Esophagus muscularis mucosa (tissue), 4 donors: ENCODE measurements at regions of chr9 and their contacts with region 1.

Region 1: GRCh38 chr9:129610473-129611301 is 10.2 kb downstream of the C9orf50 start:
- DNase-seq: no peak
- H3K4me3 ChIP-seq: peak overlapping the region; percentile 66 to 84 (median 76)
- H3K27ac ChIP-seq: peak overlapping the region; percentile 89 to 95 (median 90)
- H3K4me1 ChIP-seq: peaks cover 43 to 66% (median 54%) of the 10 kb centered on the region in 4 donors
- H3K27me3 ChIP-seq: no peaks in the 10 kb centered on the region
- CTCF ChIP-seq: peak; percentile 76 to 99 (median 98)
- EP300 ChIP-seq: no peak
- POLR2A ChIP-seq: no peak

Region 2: DNA sequence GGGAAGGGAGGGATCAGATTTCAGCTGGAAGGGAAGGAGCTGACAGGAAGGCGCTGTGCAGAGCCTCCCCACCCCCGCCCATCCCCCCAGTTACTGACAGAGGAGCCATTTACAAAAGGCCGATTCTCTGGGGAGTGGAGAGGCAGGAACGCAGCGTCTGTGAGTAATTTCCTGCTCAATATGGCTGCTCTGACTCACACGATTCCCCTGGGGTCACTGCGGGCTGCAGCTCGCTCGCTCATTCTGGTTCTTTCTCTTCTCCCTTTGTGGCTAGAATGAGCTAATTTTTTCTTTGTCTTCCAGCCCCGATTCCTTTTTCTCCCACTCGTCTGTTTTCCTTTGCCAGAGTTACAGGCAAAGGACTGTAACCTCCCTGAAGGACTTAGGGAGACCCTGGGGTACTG is 470.7 kb before region 1 on chr9:
- intact Hi-C with region 1: loop called (anchors 1 kb)
- DNase-seq: peak; percentile 99
- H3K4me3 ChIP-seq: peak overlapping the region; percentile 47 to 60 (median 58)
- H3K27ac ChIP-seq: peak overlapping the region; percentile 93 to 99 (median 98)
- H3K4me1 ChIP-seq: peaks cover 68 to 80% (median 78%) of the 10 kb centered on the region in 4 donors
- H3K27me3 ChIP-seq: no peaks in the 10 kb centered on the region
- CTCF ChIP-seq: no peak
- EP300 ChIP-seq: peak; percentile 78
- POLR2A ChIP-seq: no peak

Region 3: GRCh38 chr9:129174085-129174723 is 436.5 kb before region 1 on chr9:
- intact Hi-C with region 1: loop called (anchors 2 kb)
- DNase-seq: peak; percentile 98
- H3K4me3 ChIP-seq: peak overlapping the region; percentile 69 to 94 (median 88)
- H3K27ac ChIP-seq: peak overlapping the region; percentile 91 to 99 (median 94)
- H3K4me1 ChIP-seq: peaks cover 24 to 43% (median 38%) of the 10 kb centered on the region in 4 donors
- H3K27me3 ChIP-seq: no peaks in the 10 kb centered on the region
- CTCF ChIP-seq: peak; percentile 97 to 98 (median 98)
- EP300 ChIP-seq: no peak
- POLR2A ChIP-seq: no peak

Region 4: DNA sequence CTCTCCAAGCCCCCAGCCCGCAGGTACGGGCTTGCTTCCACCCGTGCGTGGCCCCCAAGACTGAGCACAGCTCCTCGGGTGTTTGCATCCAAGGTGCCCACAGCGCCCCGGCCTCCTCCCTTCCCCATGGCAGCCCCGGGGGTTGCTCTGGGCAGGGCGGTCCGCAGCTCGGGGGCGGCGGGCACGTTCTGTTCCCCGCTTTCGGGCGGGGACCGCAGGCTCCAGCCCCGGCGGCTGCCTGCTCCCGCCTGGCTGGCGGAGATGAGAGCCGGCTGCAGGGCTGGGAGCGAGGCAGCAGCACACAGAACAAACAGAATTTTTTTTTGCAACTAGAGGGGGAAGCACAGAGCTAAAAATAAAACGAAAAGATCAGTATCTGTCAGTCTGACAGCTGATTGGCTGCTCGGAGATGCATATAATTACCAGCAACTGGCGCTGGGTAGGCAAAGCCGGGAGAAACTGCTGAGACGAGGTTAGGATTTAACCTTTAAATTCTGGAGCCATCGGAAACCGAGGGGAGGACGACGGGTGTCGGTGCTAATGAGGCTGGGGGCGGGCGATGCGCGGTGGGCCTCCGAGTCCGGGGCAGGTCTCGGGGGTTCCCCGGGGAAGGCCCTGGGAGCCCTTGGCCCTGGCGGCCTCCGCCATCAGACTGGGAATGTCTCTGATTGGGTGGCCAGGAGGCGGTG is 290.0 kb before region 1 on chr9:
- intact Hi-C with region 1: loop called (anchors 5 kb)
- DNase-seq: no peak
- H3K4me3 ChIP-seq: peak overlapping the region; percentile 49 to 59 (median 52)
- H3K27ac ChIP-seq: peak overlapping the region; percentile 74 to 88 (median 82)
- H3K4me1 ChIP-seq: peaks cover 74 to 88% (median 86%) of the 10 kb centered on the region in 4 donors
- H3K27me3 ChIP-seq: no peaks in the 10 kb centered on the region
- CTCF ChIP-seq: peak; percentile 9 to 37 (median 35)
- EP300 ChIP-seq: no peak
- POLR2A ChIP-seq: peak; percentile 4

Region 5: DNA sequence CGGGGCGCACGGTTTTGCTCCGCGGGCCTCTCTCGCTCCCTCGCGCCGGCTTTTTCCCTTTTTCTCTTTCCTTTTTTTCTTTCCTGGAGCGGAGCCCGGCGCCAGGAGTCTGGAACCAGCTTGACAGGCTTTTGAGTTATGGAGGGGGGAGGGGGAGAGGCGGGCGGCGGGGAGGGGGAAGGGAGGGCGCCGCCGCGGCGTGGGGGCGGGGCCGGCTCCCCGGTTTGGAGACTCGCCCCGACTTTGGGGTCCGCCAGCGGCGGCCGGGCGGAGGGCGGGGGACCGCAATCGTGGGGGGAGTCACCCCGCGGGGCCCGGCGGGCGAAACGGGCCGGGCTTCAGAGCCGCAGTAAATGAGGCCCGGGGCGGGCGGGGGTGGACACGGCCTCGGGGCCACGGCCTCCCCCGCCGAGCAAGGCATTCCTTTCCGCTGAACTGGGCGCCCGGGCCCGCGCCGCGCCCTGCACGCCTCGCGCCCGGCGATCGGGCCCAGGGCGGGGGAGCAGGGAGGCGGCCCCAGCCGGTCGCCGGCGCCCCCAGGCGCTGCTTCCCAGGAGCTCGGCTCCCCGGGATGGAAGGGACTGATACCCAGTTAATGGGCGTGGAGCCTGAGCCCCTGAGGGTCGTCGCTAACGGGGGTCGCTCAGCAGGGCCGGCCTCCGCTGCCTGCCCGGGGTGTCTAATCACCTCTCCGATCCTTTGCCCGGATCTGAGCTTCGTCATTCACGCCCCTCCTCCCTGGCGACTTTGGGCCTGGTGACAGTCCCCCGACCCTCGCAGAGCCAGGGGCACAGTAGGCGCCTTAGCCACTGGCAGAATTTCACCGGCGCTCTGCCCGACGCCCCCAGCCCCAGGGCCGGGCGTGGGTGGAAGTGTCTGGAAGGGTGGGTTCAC is 127.9 kb before region 1 on chr9:
- intact Hi-C with region 1: loop called (anchors 5 kb)
- DNase-seq: peak; percentile 97
- H3K4me3 ChIP-seq: peak overlapping the region; percentile 61 to 77 (median 66)
- H3K27ac ChIP-seq: peak overlapping the region; percentile 97 to 100 (median 98)
- H3K4me1 ChIP-seq: peaks cover 65 to 95% (median 81%) of the 10 kb centered on the region in 4 donors
- H3K27me3 ChIP-seq: no peaks in the 10 kb centered on the region
- CTCF ChIP-seq: peak in 1 of 3 experiments; percentile 12
- EP300 ChIP-seq: no peak
- POLR2A ChIP-seq: no peak

Region 6: GRCh38 chr9:130107234-130107861 is 496.7 kb after region 1 on chr9:
- intact Hi-C with region 1: no loop called
- DNase-seq: peak; percentile 95
- H3K4me3 ChIP-seq: no peak overlapping the region
- H3K27ac ChIP-seq: peak overlapping the region; percentile 64 to 79 (median 70)
- H3K4me1 ChIP-seq: peaks cover 0 to 34% (median 18%) of the 10 kb centered on the region in 4 donors
- H3K27me3 ChIP-seq: no peaks in the 10 kb centered on the region
- CTCF ChIP-seq: peak; percentile 80 to 86 (median 84)
- EP300 ChIP-seq: no peak
- POLR2A ChIP-seq: no peak